ENCODE measurements at regions of chr3 and their contacts with region 1.

Region 1: GRCh38 chr3:49276475-49277382 is at the start of gene C3orf62:
- DNase-seq: peak; percentile 70 to 95 (median 87)

Region 2: DNA sequence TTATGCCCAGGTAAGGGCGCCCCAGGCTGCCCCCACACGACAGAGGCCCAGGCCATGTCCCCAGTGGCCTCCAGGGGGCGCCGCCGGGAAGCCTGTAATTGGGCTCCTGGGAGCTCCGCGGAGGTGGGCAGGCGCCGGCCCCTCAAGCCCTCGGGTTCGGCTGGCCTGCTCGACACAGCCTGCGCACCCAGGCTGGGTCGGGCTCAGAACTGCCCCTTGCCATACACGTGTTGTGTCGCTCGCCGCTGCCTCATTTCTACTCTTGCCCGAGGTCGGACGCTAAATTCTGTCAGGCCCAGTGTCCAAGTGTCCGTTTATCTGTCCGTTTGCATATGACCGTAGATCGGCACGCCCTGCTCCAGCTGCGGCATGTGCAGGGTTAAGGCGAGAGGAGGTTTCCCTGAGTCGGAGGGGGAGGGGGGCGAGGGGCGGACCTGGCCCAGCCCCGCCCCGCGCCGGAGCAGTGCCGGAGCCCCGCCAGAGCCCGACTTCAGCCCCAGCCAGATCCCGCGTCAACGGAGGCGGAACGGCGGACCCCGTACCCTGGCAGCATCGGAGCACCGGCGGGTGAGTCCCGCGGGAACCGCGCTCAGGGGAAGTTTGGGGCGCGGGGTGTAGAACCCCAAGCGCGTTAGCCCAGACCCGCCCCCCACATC is 105.5 kb before region 1 on chr3 and contains the start of gene KLHDC8B:
- intact Hi-C with region 1: loop called (anchors 5 kb)
- DNase-seq: peak; percentile 52 to 89 (median 79)

Measured in head of caudate nucleus (tissue), 42 donors.